ENCODE measurements at regions of chr9 and their contacts with region 1.

Region 1: DNA sequence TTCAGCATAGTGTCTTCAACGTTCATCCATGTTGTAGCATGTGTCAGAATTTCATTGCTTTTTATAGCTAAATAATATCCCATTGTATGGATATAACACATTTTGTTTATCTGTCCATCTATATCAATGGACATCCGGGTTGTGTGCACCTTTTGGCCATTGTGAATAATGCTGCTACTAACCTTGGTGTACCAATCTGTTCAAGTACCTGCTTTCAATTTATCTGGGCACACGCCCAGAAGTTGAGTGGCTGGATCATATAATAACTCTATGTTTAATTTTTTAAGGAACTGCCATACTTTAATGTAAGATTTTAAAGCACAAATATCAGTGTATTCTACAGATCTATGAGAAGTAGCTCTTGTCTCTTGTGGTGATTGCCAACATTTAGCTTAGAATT is 43.5 kb downstream of the SCAI start:
- DNase-seq: no peak
- H3K4me3 ChIP-seq: no peak overlapping the region
- H3K27ac ChIP-seq: no peak overlapping the region
- H3K4me1 ChIP-seq: no peaks in the 10 kb centered on the region
- H3K27me3 ChIP-seq: no peaks in the 10 kb centered on the region
- CTCF ChIP-seq: no peak

Region 2: GRCh38 chr9:124721109-124721906 is 378.5 kb before region 1 on chr9:
- CTCF ChIA-PET with region 1: interaction called, 11 read pairs
- POLR2A ChIA-PET with region 1: no interaction called
- intact Hi-C with region 1: no loop called
- DNase-seq: peak; percentile 18 to 54
- H3K4me3 ChIP-seq: no peak overlapping the region
- H3K27ac ChIP-seq: peak overlapping the region; percentile 16; the same call in 1 of the 2 replicates
- H3K4me1 ChIP-seq: peaks cover 6% of the 10 kb centered on the region; the same call in 1 of the 2 replicates
- H3K27me3 ChIP-seq: no peaks in the 10 kb centered on the region
- CTCF ChIP-seq: no peak

Region 3: GRCh38 chr9:125161284-125161918 is 61.6 kb after region 1 on chr9:
- CTCF ChIA-PET with region 1: no interaction called
- POLR2A ChIA-PET with region 1: no interaction called
- intact Hi-C with region 1: loop called (anchors 10 kb)
- DNase-seq: peak; percentile 30 to 63
- H3K4me3 ChIP-seq: no peak overlapping the region
- H3K27ac ChIP-seq: peak overlapping the region; percentile 62
- H3K4me1 ChIP-seq: peaks cover 16% of the 10 kb centered on the region
- H3K27me3 ChIP-seq: no peaks in the 10 kb centered on the region
- CTCF ChIP-seq: no peak